H1 (cell line): ENCODE measurements at regions of chr20 and their contacts with region 1.

Region 1: GRCh38 chr20:32945710-32946221 is 58.5 kb downstream of the SUN5 start:
- DNase-seq: peak in 1 of 2 experiments; percentile 43
- H3K4me3 ChIP-seq: no peak overlapping the region
- H3K27ac ChIP-seq: no peak overlapping the region
- H3K4me1 ChIP-seq: no peaks in the 10 kb centered on the region
- H3K27me3 ChIP-seq: peaks cover 10 to 28% (median 20%) of the 10 kb centered on the region in 4 experiments
- CTCF ChIP-seq: peak in 2 of 3 experiments; percentile 61 to 68; a peak in 3 of 4 replicates
- EP300 ChIP-seq: no peak
- POLR2A ChIP-seq: no peak
- RAD21 ChIP-seq: peak; percentile 64 to 66

Region 2: GRCh38 chr20:32902456-32903420 is 43.0 kb before region 1 on chr20:
- CTCF ChIA-PET with region 1: interaction called, 41 read pairs
- POLR2A ChIA-PET with region 1: no interaction called
- DNase-seq: peak in 1 of 2 experiments; percentile 72
- H3K4me3 ChIP-seq: no peak overlapping the region
- H3K27ac ChIP-seq: no peak overlapping the region
- H3K4me1 ChIP-seq: no peaks in the 10 kb centered on the region
- H3K27me3 ChIP-seq: no peaks in the 10 kb centered on the region
- CTCF ChIP-seq: peak; percentile 93 to 97 (median 95)
- EP300 ChIP-seq: no peak
- POLR2A ChIP-seq: no peak
- RAD21 ChIP-seq: peak; percentile 94 to 95

Region 3: GRCh38 chr20:32920066-32920465 is 25.7 kb before region 1 on chr20:
- CTCF ChIA-PET with region 1: interaction called, 18 read pairs
- POLR2A ChIA-PET with region 1: no interaction called
- DNase-seq: no peak
- H3K4me3 ChIP-seq: no peak overlapping the region
- H3K27ac ChIP-seq: no peak overlapping the region
- H3K4me1 ChIP-seq: no peaks in the 10 kb centered on the region; a peak in 1 of 7 replicates
- H3K27me3 ChIP-seq: no peaks in the 10 kb centered on the region; a peak in 1 of 7 replicates
- CTCF ChIP-seq: no peak
- EP300 ChIP-seq: no peak
- POLR2A ChIP-seq: no peak
- RAD21 ChIP-seq: no peak

Region 4: DNA sequence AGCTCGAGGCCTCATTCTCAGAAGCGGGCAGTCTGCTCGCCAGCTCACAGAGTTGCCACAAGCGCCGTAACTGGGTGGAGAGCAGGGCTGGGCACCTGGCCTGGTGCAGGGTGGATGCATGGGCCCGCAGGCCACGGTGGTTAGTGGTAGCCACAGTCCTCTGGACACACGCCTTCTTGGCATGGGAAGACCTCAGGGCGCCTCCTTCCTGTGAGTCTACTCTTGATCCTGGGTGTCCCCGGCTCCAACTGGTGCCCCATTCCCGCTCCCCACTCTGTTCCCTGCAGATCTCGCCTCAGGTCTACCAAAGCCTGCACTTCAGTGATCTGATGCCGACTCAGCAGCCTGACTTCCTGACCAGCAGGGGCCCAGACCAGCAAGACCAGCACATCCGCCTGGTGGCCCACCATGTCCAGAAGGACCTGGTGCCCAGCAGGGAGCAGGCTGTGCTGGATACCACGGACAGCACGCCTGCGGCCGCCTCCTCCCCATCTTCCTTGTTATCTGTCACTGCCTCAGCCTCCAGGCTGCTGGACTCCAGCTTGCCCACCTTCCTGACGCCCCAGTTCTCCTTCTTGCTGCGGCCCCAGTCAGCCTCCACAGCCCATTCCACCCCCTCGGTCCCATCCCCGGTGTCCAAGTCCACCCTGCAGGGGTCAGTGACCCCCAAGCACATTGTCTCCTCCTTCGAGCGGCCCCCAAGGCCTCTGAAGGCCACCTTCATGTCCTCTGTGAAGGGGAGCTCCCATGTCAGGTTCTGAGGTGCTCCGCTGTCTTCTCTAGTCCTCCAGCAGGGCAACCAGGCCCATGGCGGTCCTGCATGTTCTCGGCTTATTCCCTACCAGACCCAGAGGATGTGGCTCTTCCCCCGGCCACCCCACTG is 15.3 kb after region 1 on chr20:
- CTCF ChIA-PET with region 1: interaction called, 18 read pairs
- POLR2A ChIA-PET with region 1: no interaction called
- DNase-seq: no peak
- H3K4me3 ChIP-seq: no peak overlapping the region
- H3K27ac ChIP-seq: no peak overlapping the region
- H3K4me1 ChIP-seq: no peaks in the 10 kb centered on the region; a peak in 1 of 7 replicates
- H3K27me3 ChIP-seq: peaks cover 0 to 4% (median 0%) of the 10 kb centered on the region in 4 experiments; a peak in 2 of 7 replicates
- CTCF ChIP-seq: no peak
- EP300 ChIP-seq: no peak
- POLR2A ChIP-seq: no peak
- RAD21 ChIP-seq: no peak

Region 5: GRCh38 chr20:32988008-32988407 is 42.2 kb after region 1 on chr20:
- CTCF ChIA-PET with region 1: interaction called, 11 read pairs
- POLR2A ChIA-PET with region 1: no interaction called
- DNase-seq: no peak
- H3K4me3 ChIP-seq: no peak overlapping the region
- H3K27ac ChIP-seq: no peak overlapping the region
- H3K4me1 ChIP-seq: no peaks in the 10 kb centered on the region; a peak in 1 of 7 replicates
- H3K27me3 ChIP-seq: no peaks in the 10 kb centered on the region
- CTCF ChIP-seq: no peak
- EP300 ChIP-seq: no peak
- POLR2A ChIP-seq: no peak
- RAD21 ChIP-seq: no peak

Region 6: GRCh38 chr20:33024243-33024560 is 78.4 kb after region 1 on chr20:
- CTCF ChIA-PET with region 1: no interaction called
- POLR2A ChIA-PET with region 1: no interaction called
- DNase-seq: no peak
- H3K4me3 ChIP-seq: no peak overlapping the region
- H3K27ac ChIP-seq: no peak overlapping the region
- H3K4me1 ChIP-seq: no peaks in the 10 kb centered on the region
- H3K27me3 ChIP-seq: no peaks in the 10 kb centered on the region
- CTCF ChIP-seq: no peak
- EP300 ChIP-seq: no peak
- POLR2A ChIP-seq: no peak
- RAD21 ChIP-seq: no peak